ENCODE measurements at regions of chr12 and their contacts with region 1.

Region 1: GRCh38 chr12:107607464-107608392 is 77.9 kb upstream of the PWP1 start:
- DNase-seq: peak; percentile 49 to 84 (median 71)
- H3K4me3 ChIP-seq: no peak overlapping the region
- H3K4me3 Mint-ChIP-seq: peak overlapping the region in 1 of 7 donors; percentile 2
- H3K27ac ChIP-seq: no peak overlapping the region
- H3K27ac Mint-ChIP-seq: peak overlapping the region in 1 of 8 donors; percentile 3
- H3K4me1 ChIP-seq: no peaks in the 10 kb centered on the region
- H3K4me1 Mint-ChIP-seq: no peaks in the 10 kb centered on the region
- H3K27me3 ChIP-seq: no peaks in the 10 kb centered on the region
- H3K27me3 Mint-ChIP-seq: no peaks in the 10 kb centered on the region

Region 2: GRCh38 chr12:107619831-107620230 is 12.1 kb after region 1 on chr12:
- CTCF ChIA-PET with region 1: interaction called, 10 read pairs
- POLR2A ChIA-PET with region 1: no interaction called
- DNase-seq: no peak
- H3K4me3 ChIP-seq: no peak overlapping the region
- H3K4me3 Mint-ChIP-seq: peak overlapping the region in 1 of 7 donors; percentile 23
- H3K27ac ChIP-seq: no peak overlapping the region
- H3K27ac Mint-ChIP-seq: no peak overlapping the region
- H3K4me1 ChIP-seq: no peaks in the 10 kb centered on the region
- H3K4me1 Mint-ChIP-seq: no peaks in the 10 kb centered on the region
- H3K27me3 ChIP-seq: no peaks in the 10 kb centered on the region
- H3K27me3 Mint-ChIP-seq: peaks cover 0 to 1% of the 10 kb centered on the region in 2 donors

Region 3: GRCh38 chr12:107645630-107646333 is 38.1 kb after region 1 on chr12:
- CTCF ChIA-PET with region 1: no interaction called
- POLR2A ChIA-PET with region 1: no interaction called
- DNase-seq: no peak
- H3K4me3 ChIP-seq: no peak overlapping the region
- H3K4me3 Mint-ChIP-seq: no peak overlapping the region
- H3K27ac ChIP-seq: no peak overlapping the region
- H3K27ac Mint-ChIP-seq: no peak overlapping the region
- H3K4me1 ChIP-seq: no peaks in the 10 kb centered on the region
- H3K4me1 Mint-ChIP-seq: no peaks in the 10 kb centered on the region
- H3K27me3 ChIP-seq: no peaks in the 10 kb centered on the region
- H3K27me3 Mint-ChIP-seq: peaks cover 0 to 2% of the 10 kb centered on the region in 2 donors

Measured in CD8-positive, alpha-beta memory T cell (primary cell).